ENCODE measurements at regions of chr9 and their contacts with region 1.

Region 1: GRCh38 chr9:36136272-36136893 is at the start of gene GLIPR2:
- DNase-seq: peak; percentile 95
- H3K4me3 Mint-ChIP-seq: peak within 1 kb of the TSS; percentile 88
- H3K27ac Mint-ChIP-seq: peak within 1 kb of the TSS; percentile 77
- H3K4me1 Mint-ChIP-seq: peaks cover 46% of the 10 kb centered on the region
- H3K27me3 Mint-ChIP-seq: peaks cover 19% of the 10 kb centered on the region
- total RNA-seq, gene GLIPR2: 25.5 and 25.7 TPM in 2 replicates

Region 2: DNA sequence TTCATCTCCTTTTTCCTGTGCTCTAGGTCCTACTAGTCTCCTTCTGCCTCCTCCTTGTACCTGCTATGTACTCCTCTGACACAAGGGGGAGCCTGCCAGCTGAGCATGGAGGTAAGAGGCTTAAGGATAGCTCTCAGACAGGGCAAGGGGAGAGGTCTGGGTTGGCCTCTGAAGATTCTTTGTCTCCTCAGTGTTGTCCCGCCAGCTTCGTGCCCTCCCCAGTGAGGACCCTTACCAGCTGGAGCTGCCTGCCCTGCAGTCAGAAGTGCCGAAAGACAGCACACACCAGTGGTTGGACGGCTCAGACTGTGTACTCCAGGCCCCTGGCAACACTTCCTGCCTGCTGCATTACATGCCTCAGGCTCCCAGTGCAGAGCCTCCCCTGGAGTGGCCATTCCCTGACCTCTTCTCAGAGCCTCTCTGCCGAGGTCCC is 400.2 kb before region 1 on chr9:
- intact Hi-C with region 1: no loop called
- DNase-seq: peak; percentile 92
- H3K4me3 Mint-ChIP-seq: no peak overlapping the region
- H3K27ac Mint-ChIP-seq: no peak overlapping the region
- H3K4me1 Mint-ChIP-seq: peaks cover 20% of the 10 kb centered on the region
- H3K27me3 Mint-ChIP-seq: no peaks in the 10 kb centered on the region

Region 3: GRCh38 chr9:36102742-36103495 is 33.5 kb before region 1 on chr9:
- intact Hi-C with region 1: loop called (anchors 2 kb)
- DNase-seq: peak; percentile 95
- H3K4me3 Mint-ChIP-seq: no peak overlapping the region
- H3K27ac Mint-ChIP-seq: peak overlapping the region; percentile 3
- H3K4me1 Mint-ChIP-seq: peaks cover 12% of the 10 kb centered on the region
- H3K27me3 Mint-ChIP-seq: no peaks in the 10 kb centered on the region

Region 4: GRCh38 chr9:36148311-36149051 is 12.1 kb after region 1 on chr9:
- intact Hi-C with region 1: loop called (anchors 1 kb)
- DNase-seq: peak; percentile 85
- H3K4me3 Mint-ChIP-seq: peak overlapping the region; percentile 5
- H3K27ac Mint-ChIP-seq: peak overlapping the region; percentile 45
- H3K4me1 Mint-ChIP-seq: peaks cover 76% of the 10 kb centered on the region
- H3K27me3 Mint-ChIP-seq: no peaks in the 10 kb centered on the region

Region 5: GRCh38 chr9:36158917-36159316 is 22.5 kb after region 1 on chr9:
- intact Hi-C with region 1: no loop called
- DNase-seq: no peak
- H3K4me3 Mint-ChIP-seq: no peak overlapping the region
- H3K27ac Mint-ChIP-seq: no peak overlapping the region
- H3K4me1 Mint-ChIP-seq: peaks cover 28% of the 10 kb centered on the region
- H3K27me3 Mint-ChIP-seq: no peaks in the 10 kb centered on the region

Region 6: GRCh38 chr9:36258208-36258988 is 122.0 kb after region 1 on chr9 and contains the start of gene GNE:
- intact Hi-C with region 1: loop called (anchors 5 kb)
- DNase-seq: peak; percentile 100
- H3K4me3 Mint-ChIP-seq: peak within 1 kb of the TSS; percentile 93
- H3K27ac Mint-ChIP-seq: peak within 1 kb of the TSS; percentile 94
- H3K4me1 Mint-ChIP-seq: peaks cover 10% of the 10 kb centered on the region
- H3K27me3 Mint-ChIP-seq: peaks cover 2% of the 10 kb centered on the region
- total RNA-seq, gene GNE: 22.2 and 23.3 TPM in 2 replicates